CD4-positive, alpha-beta memory T cell (primary cell): ENCODE measurements at regions of chr14 and their contacts with region 1.

Region 1: GRCh38 chr14:61694830-61695694 is at the start of gene HIF1A:
- DNase-seq: peak; percentile 94 to 98 (median 97)
- H3K4me3 ChIP-seq: peak within 1 kb of the TSS; percentile 74 to 92
- H3K4me3 Mint-ChIP-seq: peak within 1 kb of the TSS; percentile 90 to 99 (median 97)
- H3K27ac ChIP-seq: peak within 1 kb of the TSS; percentile 88
- H3K27ac Mint-ChIP-seq: peak within 1 kb of the TSS; percentile 94 to 98 (median 97)
- H3K4me1 ChIP-seq: peaks cover 51% of the 10 kb centered on the region
- H3K4me1 Mint-ChIP-seq: peaks cover 33 to 70% (median 48%) of the 10 kb centered on the region in 4 donors
- H3K27me3 ChIP-seq: no peaks in the 10 kb centered on the region
- H3K27me3 Mint-ChIP-seq: no peaks in the 10 kb centered on the region
- total RNA-seq, gene HIF1A: 84.7 to 87.1 TPM

Region 2: GRCh38 chr14:61568572-61569131 is 126.4 kb before region 1 on chr14:
- CTCF ChIA-PET with region 1: no interaction called
- POLR2A ChIA-PET with region 1: interaction called, 3 read pairs
- intact Hi-C with region 1: loop called (anchors 5 kb)
- DNase-seq: peak; percentile 45 to 62 (median 62)
- H3K4me3 ChIP-seq: no peak overlapping the region
- H3K4me3 Mint-ChIP-seq: peak overlapping the region; percentile 59 to 86 (median 74)
- H3K27ac ChIP-seq: no peak overlapping the region
- H3K27ac Mint-ChIP-seq: peak overlapping the region in 6 of 7 donors; percentile 2 to 83 (median 54)
- H3K4me1 ChIP-seq: peaks cover 30% of the 10 kb centered on the region
- H3K4me1 Mint-ChIP-seq: peaks cover 25 to 54% (median 36%) of the 10 kb centered on the region in 4 donors
- H3K27me3 ChIP-seq: no peaks in the 10 kb centered on the region
- H3K27me3 Mint-ChIP-seq: no peaks in the 10 kb centered on the region

Region 3: DNA sequence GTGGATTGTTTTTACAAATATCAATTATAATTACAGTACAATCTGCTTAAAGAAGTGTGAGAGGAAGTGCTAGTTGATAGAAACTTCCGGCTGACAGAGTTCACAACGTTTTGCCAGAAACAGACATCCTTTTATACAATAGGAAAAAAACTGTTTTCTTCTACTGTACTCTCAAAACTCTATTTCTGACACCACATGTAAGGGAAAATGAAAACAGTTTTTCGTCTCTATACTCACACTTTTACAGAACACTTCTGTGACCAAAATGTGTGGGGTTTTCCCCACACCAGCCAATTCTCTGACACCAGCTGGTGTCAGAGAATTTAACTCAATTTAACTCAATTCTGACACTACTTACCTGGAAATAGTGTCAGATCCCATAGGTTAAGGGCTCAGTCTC is 24.0 kb before region 1 on chr14:
- CTCF ChIA-PET with region 1: interaction called, 4 read pairs
- POLR2A ChIA-PET with region 1: interaction called, 21 read pairs
- intact Hi-C with region 1: loop called (anchors 1 kb)
- DNase-seq: peak; percentile 58 to 80 (median 69)
- H3K4me3 ChIP-seq: peak overlapping the region in 1 of 2 donors; percentile 38
- H3K4me3 Mint-ChIP-seq: no peak overlapping the region
- H3K27ac ChIP-seq: peak overlapping the region; percentile 70
- H3K27ac Mint-ChIP-seq: no peak overlapping the region
- H3K4me1 ChIP-seq: peaks cover 57% of the 10 kb centered on the region
- H3K4me1 Mint-ChIP-seq: peaks cover 0 to 14% (median 8%) of the 10 kb centered on the region in 4 donors
- H3K27me3 ChIP-seq: no peaks in the 10 kb centered on the region
- H3K27me3 Mint-ChIP-seq: no peaks in the 10 kb centered on the region

Region 4: DNA sequence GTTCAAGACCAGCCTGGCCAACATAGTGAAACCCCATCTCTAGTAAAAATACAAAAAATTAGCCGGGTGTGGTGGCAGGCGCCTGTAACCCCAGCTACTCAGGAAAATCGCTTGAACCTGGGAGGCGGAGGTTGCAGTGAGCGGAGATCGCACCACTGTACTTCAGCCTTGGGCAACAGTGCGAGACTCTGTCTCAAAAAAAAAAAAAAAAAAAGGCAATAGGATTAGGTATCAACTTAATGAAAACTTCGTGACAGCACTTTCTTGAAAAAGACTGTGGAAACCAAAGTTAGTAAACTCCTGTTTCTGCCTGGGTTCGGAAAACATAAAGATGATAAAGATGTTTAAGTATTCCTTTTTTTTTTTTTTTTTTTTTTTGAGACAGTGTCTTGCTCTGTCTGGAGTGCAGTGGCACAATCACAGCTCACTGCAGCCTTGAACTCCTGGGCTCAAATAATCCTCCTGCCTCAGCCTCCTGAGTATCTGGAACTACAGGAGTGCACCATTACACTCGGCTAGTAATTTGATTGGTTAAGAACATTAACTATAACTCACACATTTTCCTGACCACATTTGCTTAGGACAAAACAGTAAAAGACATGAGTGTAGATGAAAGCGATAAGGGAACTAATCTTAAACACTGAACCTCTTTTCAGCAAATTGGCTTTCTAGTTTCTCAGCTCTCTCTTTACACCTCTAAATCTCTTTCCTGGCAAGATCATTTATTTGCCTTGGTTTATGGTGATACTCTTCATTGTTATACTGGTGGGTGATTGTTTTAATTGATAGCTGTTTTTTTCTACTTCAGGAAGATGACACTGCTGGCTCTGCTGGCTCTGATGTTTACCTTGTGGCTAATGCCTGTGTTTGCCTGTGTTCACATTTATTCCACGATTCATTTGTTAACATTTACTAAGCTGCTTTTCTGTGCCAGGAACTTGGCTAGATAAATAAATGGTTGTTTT is 16.1 kb after region 1 on chr14:
- CTCF ChIA-PET with region 1: interaction called, 4 read pairs
- POLR2A ChIA-PET with region 1: interaction called, 13 read pairs
- intact Hi-C with region 1: loop called (anchors 2 kb)
- DNase-seq: no peak
- H3K4me3 ChIP-seq: no peak overlapping the region
- H3K4me3 Mint-ChIP-seq: peak overlapping the region in 7 of 8 donors; percentile 6 to 66 (median 54)
- H3K27ac ChIP-seq: no peak overlapping the region
- H3K27ac Mint-ChIP-seq: peak overlapping the region in 6 of 7 donors; percentile 1 to 61 (median 26)
- H3K4me1 ChIP-seq: peaks cover 74% of the 10 kb centered on the region
- H3K4me1 Mint-ChIP-seq: peaks cover 62 to 84% (median 73%) of the 10 kb centered on the region in 4 donors
- H3K27me3 ChIP-seq: no peaks in the 10 kb centered on the region
- H3K27me3 Mint-ChIP-seq: no peaks in the 10 kb centered on the region

Region 5: GRCh38 chr14:61730756-61731373 is 35.8 kb after region 1 on chr14:
- CTCF ChIA-PET with region 1: interaction called, 4 read pairs
- POLR2A ChIA-PET with region 1: interaction called, 3 read pairs
- intact Hi-C with region 1: loop called (anchors 5 kb)
- DNase-seq: peak in 4 of 5 donors; percentile 30 to 34 (median 30)
- H3K4me3 ChIP-seq: no peak overlapping the region
- H3K4me3 Mint-ChIP-seq: no peak overlapping the region
- H3K27ac ChIP-seq: no peak overlapping the region
- H3K27ac Mint-ChIP-seq: peak overlapping the region in 6 of 7 donors; percentile 2 to 83 (median 52)
- H3K4me1 ChIP-seq: peaks cover 5% of the 10 kb centered on the region
- H3K4me1 Mint-ChIP-seq: peaks cover 10 to 16% (median 12%) of the 10 kb centered on the region in 4 donors
- H3K27me3 ChIP-seq: no peaks in the 10 kb centered on the region
- H3K27me3 Mint-ChIP-seq: no peaks in the 10 kb centered on the region